HepG2 (cell line): ENCODE measurements at regions of chr1 and their contacts with region 1.

Region 1: GRCh38 chr1:234610348-234611152 is 572 bp upstream of the IRF2BP2 start:
- DNase-seq: peak; percentile 90
- ATAC-seq: peak; percentile 56
- H3K4me3 ChIP-seq: peak overlapping the region; percentile 35 to 71 (median 40)
- H3K27ac ChIP-seq: peak overlapping the region; percentile 99
- H3K4me1 ChIP-seq: peaks cover 47% of the 10 kb centered on the region
- H3K27me3 ChIP-seq: no peaks in the 10 kb centered on the region; a peak in 2 of 5 replicates
- CTCF ChIP-seq: peak; percentile 31
- EP300 ChIP-seq: 0 out of 4 replicates have a peak, but pooled peaks of 1 of the 2 experiments have one; percentile 16
- POLR2A ChIP-seq: peak in 1 of 2 experiments; percentile 82; a peak in 2 of 4 replicates
- RAD21 ChIP-seq: peak; percentile 7; the same call in 1 of the 2 replicates

Region 2: GRCh38 chr1:234544087-234544579 is 66.4 kb before region 1 on chr1:
- CTCF ChIA-PET with region 1: no interaction called
- POLR2A ChIA-PET with region 1: interaction called, 17 read pairs
- in situ Hi-C with region 1: no loop called
- intact Hi-C with region 1: no loop called
- DNase-seq: peak; percentile 78
- ATAC-seq: peak; percentile 24
- H3K4me3 ChIP-seq: peak overlapping the region in 1 of 3 experiments; percentile 67; a peak in 1 of 6 replicates
- H3K27ac ChIP-seq: peak overlapping the region; percentile 18
- H3K4me1 ChIP-seq: peaks cover 58% of the 10 kb centered on the region
- H3K27me3 ChIP-seq: peaks cover 2 to 6% of the 10 kb centered on the region in 2 experiments; a peak in 3 of 5 replicates
- CTCF ChIP-seq: no peak
- EP300 ChIP-seq: no peak
- POLR2A ChIP-seq: no peak
- RAD21 ChIP-seq: no peak

Region 3: GRCh38 chr1:234554698-234555311 is 55.7 kb before region 1 on chr1:
- CTCF ChIA-PET with region 1: no interaction called
- POLR2A ChIA-PET with region 1: no interaction called
- in situ Hi-C with region 1: no loop called
- intact Hi-C with region 1: no loop called
- DNase-seq: peak; percentile 42
- ATAC-seq: no peak
- H3K4me3 ChIP-seq: no peak overlapping the region
- H3K27ac ChIP-seq: no peak overlapping the region
- H3K4me1 ChIP-seq: peaks cover 62% of the 10 kb centered on the region
- H3K27me3 ChIP-seq: 0 out of 5 replicates have a peak, but pooled peaks cover 0 to 2% of the 10 kb centered on the region in 2 experiments
- CTCF ChIP-seq: no peak
- EP300 ChIP-seq: no peak
- POLR2A ChIP-seq: no peak
- RAD21 ChIP-seq: no peak

Region 4: DNA sequence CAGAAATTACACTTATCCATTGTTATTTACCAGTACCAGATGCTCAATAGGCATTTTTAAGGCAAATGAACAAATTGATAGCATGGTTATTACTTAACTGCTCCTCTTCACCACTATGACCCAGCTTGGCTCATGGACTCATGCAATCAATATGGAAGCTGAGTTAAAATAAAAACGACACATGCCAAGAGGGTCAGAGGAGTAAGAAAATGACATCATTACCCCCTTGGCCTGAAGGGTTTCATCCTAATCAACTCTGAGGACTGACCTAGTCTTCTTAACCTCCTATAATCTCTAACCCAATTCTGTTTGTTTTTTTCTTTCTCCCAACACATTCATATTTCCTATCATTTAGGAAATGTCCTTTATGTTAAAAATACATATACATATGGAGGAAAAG is 42.2 kb before region 1 on chr1:
- CTCF ChIA-PET with region 1: no interaction called
- POLR2A ChIA-PET with region 1: no interaction called
- in situ Hi-C with region 1: no loop called
- intact Hi-C with region 1: no loop called
- DNase-seq: no peak
- ATAC-seq: no peak
- H3K4me3 ChIP-seq: no peak overlapping the region
- H3K27ac ChIP-seq: no peak overlapping the region
- H3K4me1 ChIP-seq: peaks cover 37% of the 10 kb centered on the region
- H3K27me3 ChIP-seq: peaks cover 0 to 4% of the 10 kb centered on the region in 2 experiments; a peak in 1 of 5 replicates
- CTCF ChIP-seq: no peak
- EP300 ChIP-seq: no peak
- POLR2A ChIP-seq: no peak
- RAD21 ChIP-seq: no peak

Region 5: DNA sequence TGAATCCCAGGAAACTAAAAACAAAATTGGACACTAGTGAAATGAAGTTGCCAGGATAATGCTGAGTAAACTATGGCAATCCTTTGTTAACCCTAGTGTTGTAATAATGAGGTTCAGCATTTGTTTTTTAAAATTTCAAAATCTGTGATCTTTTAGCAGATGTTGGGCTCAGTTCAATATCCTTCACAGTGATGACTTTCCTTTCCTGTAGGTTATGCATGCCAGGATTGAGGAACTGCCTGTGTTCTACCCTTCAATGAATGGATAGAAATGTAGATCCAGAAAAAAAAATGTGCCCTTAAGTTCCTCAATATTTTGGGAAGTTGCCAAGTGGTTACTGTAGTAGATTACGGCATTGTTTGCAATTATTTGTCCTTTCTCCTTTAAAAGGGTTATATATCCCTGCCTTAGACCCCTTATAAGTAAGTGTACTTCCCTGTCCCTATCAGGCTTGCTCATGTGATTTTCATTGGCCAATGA is 35.0 kb after region 1 on chr1:
- CTCF ChIA-PET with region 1: no interaction called
- POLR2A ChIA-PET with region 1: interaction called, 106 read pairs
- in situ Hi-C with region 1: no loop called
- intact Hi-C with region 1: loop called (anchors 1 kb)
- DNase-seq: no peak
- ATAC-seq: no peak
- H3K4me3 ChIP-seq: no peak overlapping the region
- H3K27ac ChIP-seq: peak overlapping the region; percentile 83
- H3K4me1 ChIP-seq: peaks cover 63% of the 10 kb centered on the region
- H3K27me3 ChIP-seq: no peaks in the 10 kb centered on the region
- CTCF ChIP-seq: no peak
- EP300 ChIP-seq: no peak
- POLR2A ChIP-seq: no peak
- RAD21 ChIP-seq: no peak

Region 6: DNA sequence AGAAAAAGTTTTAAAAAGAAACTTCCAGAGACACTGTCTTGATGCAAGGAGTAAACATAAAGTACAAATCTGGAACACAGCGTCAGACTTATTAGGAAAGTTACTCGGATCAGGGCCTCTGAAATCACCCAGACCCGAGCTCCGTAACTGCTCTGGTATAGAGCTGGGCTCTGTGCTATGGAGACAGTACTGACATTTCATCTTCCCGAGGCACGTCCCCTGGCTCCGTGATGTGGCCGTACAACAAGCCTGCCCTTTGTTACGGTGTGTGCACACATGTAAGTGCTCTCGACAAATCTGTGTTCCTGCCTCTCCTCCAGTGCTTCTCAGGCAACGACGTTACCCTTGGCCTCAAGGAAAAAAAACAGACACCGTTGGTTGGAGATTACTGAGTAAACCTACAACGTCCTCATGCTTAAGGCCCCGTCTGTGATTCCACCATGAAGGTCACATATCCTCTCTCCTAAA is 106.4 kb after region 1 on chr1:
- CTCF ChIA-PET with region 1: no interaction called
- POLR2A ChIA-PET with region 1: interaction called, 1,137 read pairs
- in situ Hi-C with region 1: loop called (anchors 5 kb)
- intact Hi-C with region 1: loop called (anchors 1 kb)
- DNase-seq: peak; percentile 81
- ATAC-seq: peak; percentile 62
- H3K4me3 ChIP-seq: peak overlapping the region; percentile 52 to 75 (median 62)
- H3K27ac ChIP-seq: peak overlapping the region; percentile 99
- H3K4me1 ChIP-seq: peaks cover 98% of the 10 kb centered on the region
- H3K27me3 ChIP-seq: no peaks in the 10 kb centered on the region; a peak in 1 of 5 replicates
- CTCF ChIP-seq: no peak
- EP300 ChIP-seq: no peak
- POLR2A ChIP-seq: peak; percentile 64 to 68; a peak in 3 of 4 replicates
- RAD21 ChIP-seq: no peak

Region 7: GRCh38 chr1:234772345-234773147 is 162.0 kb after region 1 on chr1:
- CTCF ChIA-PET with region 1: no interaction called
- POLR2A ChIA-PET with region 1: interaction called, 55 read pairs
- in situ Hi-C with region 1: no loop called
- intact Hi-C with region 1: loop called (anchors 2 kb)
- DNase-seq: peak; percentile 93
- ATAC-seq: peak; percentile 66
- H3K4me3 ChIP-seq: no peak overlapping the region
- H3K27ac ChIP-seq: peak overlapping the region; percentile 73
- H3K4me1 ChIP-seq: peaks cover 61% of the 10 kb centered on the region
- H3K27me3 ChIP-seq: peaks cover 0 to 7% of the 10 kb centered on the region in 2 experiments; a peak in 2 of 5 replicates
- CTCF ChIP-seq: no peak
- EP300 ChIP-seq: peak; percentile 25 to 87; a peak in 2 of 4 replicates
- POLR2A ChIP-seq: 0 out of 4 replicates have a peak, but pooled peaks of 1 of the 2 experiments have one; percentile 28
- RAD21 ChIP-seq: 0 out of 2 replicates have a peak, but pooled peaks have one; percentile 21

Region 8: GRCh38 chr1:234963180-234963903 is 352.8 kb after region 1 on chr1:
- CTCF ChIA-PET with region 1: no interaction called
- POLR2A ChIA-PET with region 1: interaction called, 119 read pairs
- in situ Hi-C with region 1: loop called (anchors 5 kb)
- intact Hi-C with region 1: loop called (anchors 1 kb)
- DNase-seq: peak; percentile 99
- ATAC-seq: peak; percentile 70
- H3K4me3 ChIP-seq: peak overlapping the region in 2 of 3 experiments; percentile 33 to 55; a peak in 2 of 6 replicates
- H3K27ac ChIP-seq: peak overlapping the region; percentile 100
- H3K4me1 ChIP-seq: peaks cover 78% of the 10 kb centered on the region
- H3K27me3 ChIP-seq: no peaks in the 10 kb centered on the region
- CTCF ChIP-seq: no peak
- EP300 ChIP-seq: peak in 1 of 2 experiments; percentile 98; a peak in 2 of 4 replicates
- POLR2A ChIP-seq: peak; percentile 70 to 80
- RAD21 ChIP-seq: peak; percentile 26; the same call in 1 of the 2 replicates